ENCODE measurements at regions of chr12 and their contacts with region 1.

Region 1: GRCh38 chr12:106223485-106224354 is 24.1 kb downstream of the CKAP4 start:
- DNase-seq: peak; percentile 77
- H3K4me3 ChIP-seq: no peak overlapping the region
- H3K27ac ChIP-seq: peak overlapping the region; percentile 39 to 73
- H3K4me1 ChIP-seq: no peaks in the 10 kb centered on the region
- H3K27me3 ChIP-seq: no peaks in the 10 kb centered on the region
- CTCF ChIP-seq: peak; percentile 87 to 95 (median 92)
- POLR2A ChIP-seq: no peak

Region 2: DNA sequence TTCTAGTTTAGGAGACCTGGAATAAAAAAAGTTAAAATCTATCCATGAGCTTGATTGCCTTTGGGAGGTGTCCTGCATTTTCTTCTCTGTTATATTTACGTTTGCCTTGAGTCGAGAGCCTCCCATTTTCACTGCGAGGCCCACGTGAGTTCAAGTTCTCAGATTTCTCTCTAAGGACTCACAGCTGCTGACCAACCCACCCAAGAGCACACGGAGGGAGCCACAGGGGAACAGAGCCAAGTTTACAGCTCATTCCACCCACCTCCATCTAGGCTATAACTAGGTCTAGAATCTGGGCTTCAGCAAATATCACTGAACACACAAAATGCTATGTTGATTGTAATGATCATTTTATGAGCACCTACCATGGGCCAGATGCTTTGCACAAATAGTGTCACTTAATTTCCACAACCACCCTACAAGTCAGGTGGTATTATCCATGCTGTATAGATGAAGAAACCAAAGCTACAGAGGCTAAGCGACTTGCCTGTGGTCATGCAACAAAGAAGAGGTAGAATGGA is 1156.1 kb before region 1 on chr12:
- intact Hi-C with region 1: no loop called
- DNase-seq: no peak
- H3K4me3 ChIP-seq: no peak overlapping the region
- H3K27ac ChIP-seq: no peak overlapping the region
- H3K4me1 ChIP-seq: no peaks in the 10 kb centered on the region
- H3K27me3 ChIP-seq: no peaks in the 10 kb centered on the region
- CTCF ChIP-seq: no peak
- POLR2A ChIP-seq: no peak

Region 3: GRCh38 chr12:105420659-105421240 is 803.0 kb before region 1 on chr12:
- intact Hi-C with region 1: loop called (anchors 5 kb)
- DNase-seq: peak; percentile 78 to 81
- H3K4me3 ChIP-seq: no peak overlapping the region
- H3K27ac ChIP-seq: peak overlapping the region in 1 of 2 donors; percentile 8
- H3K4me1 ChIP-seq: peaks cover 0 to 4% of the 10 kb centered on the region in 2 donors
- H3K27me3 ChIP-seq: no peaks in the 10 kb centered on the region
- CTCF ChIP-seq: peak; percentile 88 to 95 (median 92)
- POLR2A ChIP-seq: no peak

Region 4: DNA sequence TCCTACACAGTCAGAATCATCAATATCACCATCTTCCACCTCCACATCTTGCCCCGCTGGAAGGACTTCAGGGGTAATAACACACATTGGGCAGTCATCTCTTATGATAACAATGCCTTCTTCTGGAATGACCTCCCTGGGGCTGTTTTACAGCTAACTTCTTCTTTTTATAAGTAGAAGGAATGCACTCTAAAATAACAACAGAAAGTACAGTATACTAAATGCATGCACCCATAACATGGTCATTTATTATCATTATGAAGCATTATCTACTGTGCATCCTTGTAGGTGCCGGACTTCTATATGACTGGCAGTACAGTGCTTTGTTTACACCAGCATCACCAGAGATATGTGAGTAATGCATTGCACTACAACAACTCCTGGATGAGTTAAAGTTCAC is 65.9 kb before region 1 on chr12:
- intact Hi-C with region 1: no loop called
- DNase-seq: no peak
- H3K4me3 ChIP-seq: no peak overlapping the region
- H3K27ac ChIP-seq: no peak overlapping the region
- H3K4me1 ChIP-seq: no peaks in the 10 kb centered on the region
- H3K27me3 ChIP-seq: no peaks in the 10 kb centered on the region
- CTCF ChIP-seq: no peak
- POLR2A ChIP-seq: no peak

Region 5: DNA sequence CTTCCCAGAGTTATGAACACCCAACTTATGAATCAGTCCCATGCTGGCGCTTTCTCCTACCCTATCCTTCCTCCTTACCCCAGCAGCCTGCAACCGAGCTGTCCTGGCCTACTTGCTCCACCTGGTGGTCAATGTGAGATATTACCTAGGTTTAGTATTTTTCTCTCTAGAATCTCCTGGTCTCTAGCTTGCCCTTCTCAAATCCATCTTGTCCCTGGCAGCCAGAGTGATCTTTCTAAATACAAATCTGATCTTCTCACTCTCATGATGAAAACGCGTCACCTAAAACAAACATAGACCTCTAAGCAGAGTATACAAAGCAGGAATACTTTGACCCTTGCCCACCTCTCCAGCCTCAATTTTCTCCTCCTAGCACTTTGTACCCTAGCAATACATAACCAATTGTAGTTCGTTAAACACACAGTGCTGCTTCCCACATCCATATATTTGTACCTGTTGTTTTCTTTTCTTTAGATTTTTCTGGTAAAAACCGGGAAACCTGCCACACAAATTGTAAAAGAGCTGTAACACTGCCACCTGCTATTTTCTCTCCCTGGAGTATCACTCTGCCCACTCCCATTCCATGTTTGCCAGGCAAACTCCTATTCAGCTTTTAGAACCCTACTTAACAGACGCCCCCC is 58.9 kb after region 1 on chr12:
- intact Hi-C with region 1: loop called (anchors 5 kb)
- DNase-seq: peak; percentile 32 to 61
- H3K4me3 ChIP-seq: no peak overlapping the region
- H3K27ac ChIP-seq: no peak overlapping the region
- H3K4me1 ChIP-seq: no peaks in the 10 kb centered on the region
- H3K27me3 ChIP-seq: no peaks in the 10 kb centered on the region
- CTCF ChIP-seq: peak; percentile 60 to 78 (median 74)
- POLR2A ChIP-seq: no peak

Measured in uterus (tissue), 4 donors.